ENCODE measurements at regions of chr9 and their contacts with region 1.

Region 1: DNA sequence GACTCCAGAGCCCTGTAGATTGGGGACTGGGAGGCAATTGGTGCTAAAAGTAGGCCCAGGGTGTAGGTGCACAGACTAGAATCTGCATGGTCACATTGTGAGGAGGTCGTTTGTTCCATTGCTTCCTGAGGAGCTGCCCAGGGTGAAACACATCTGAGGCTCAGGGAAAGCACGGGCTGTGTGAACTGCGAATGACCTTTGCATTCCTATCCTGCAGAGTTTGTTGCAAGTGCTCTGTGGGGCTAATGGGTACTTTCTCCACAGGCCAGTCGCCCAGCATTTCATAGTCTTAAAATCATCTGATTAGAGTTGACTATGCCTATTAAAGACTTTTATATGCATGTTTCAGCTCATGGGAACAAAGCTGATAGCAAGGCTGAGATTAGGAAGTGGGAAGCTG is 14.4 kb upstream of the SLC46A2 start:
- DNase-seq: no peak
- H3K4me3 ChIP-seq: no peak overlapping the region
- H3K27ac ChIP-seq: no peak overlapping the region
- H3K4me1 ChIP-seq: no peaks in the 10 kb centered on the region
- H3K27me3 ChIP-seq: no peaks in the 10 kb centered on the region
- CTCF ChIP-seq: no peak
- EP300 ChIP-seq: no peak
- POLR2A ChIP-seq: no peak

Region 2: DNA sequence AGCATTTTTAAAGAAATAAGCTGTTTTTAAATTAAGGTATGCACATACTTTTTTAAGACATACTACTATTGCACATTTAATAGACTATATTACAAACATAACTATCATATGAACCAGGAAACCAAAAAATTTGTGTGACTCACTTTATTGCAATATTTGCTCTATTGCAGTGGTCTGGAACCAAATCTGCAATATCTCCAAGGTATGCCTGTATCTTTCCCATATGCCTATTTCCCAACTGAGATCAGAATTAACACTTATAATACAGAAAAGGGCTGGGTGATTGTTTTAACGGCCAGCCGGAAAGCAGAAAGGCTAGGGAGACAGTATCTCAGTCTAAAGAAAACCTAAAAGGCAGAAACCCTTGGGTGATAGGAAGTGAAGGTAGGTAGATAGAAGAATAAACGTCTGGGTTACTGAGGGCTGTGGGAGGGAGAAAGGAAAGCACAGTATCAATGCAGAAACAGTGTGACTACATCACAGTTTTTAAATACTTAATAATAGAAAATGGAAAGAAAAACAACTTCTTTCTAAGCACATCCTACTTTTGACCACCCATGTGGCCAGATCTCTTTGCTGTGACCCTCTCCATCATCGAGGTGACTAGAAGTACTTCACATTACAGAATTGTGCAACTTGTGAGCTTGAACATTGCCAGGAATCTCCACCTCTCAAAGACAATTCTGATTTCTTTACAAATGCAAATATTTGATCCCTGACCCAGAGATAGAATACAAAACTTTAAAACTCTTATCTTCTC is 1993.2 kb before region 1 on chr9:
- in situ Hi-C with region 1: no loop called
- intact Hi-C with region 1: loop called (anchors 5 kb)
- DNase-seq: no peak
- H3K4me3 ChIP-seq: no peak overlapping the region
- H3K27ac ChIP-seq: peak overlapping the region; percentile 28 to 57 (median 50)
- H3K4me1 ChIP-seq: peaks cover 0 to 10% (median 0%) of the 10 kb centered on the region in 4 donors
- H3K27me3 ChIP-seq: no peaks in the 10 kb centered on the region
- CTCF ChIP-seq: no peak
- EP300 ChIP-seq: no peak
- POLR2A ChIP-seq: no peak

Region 3: DNA sequence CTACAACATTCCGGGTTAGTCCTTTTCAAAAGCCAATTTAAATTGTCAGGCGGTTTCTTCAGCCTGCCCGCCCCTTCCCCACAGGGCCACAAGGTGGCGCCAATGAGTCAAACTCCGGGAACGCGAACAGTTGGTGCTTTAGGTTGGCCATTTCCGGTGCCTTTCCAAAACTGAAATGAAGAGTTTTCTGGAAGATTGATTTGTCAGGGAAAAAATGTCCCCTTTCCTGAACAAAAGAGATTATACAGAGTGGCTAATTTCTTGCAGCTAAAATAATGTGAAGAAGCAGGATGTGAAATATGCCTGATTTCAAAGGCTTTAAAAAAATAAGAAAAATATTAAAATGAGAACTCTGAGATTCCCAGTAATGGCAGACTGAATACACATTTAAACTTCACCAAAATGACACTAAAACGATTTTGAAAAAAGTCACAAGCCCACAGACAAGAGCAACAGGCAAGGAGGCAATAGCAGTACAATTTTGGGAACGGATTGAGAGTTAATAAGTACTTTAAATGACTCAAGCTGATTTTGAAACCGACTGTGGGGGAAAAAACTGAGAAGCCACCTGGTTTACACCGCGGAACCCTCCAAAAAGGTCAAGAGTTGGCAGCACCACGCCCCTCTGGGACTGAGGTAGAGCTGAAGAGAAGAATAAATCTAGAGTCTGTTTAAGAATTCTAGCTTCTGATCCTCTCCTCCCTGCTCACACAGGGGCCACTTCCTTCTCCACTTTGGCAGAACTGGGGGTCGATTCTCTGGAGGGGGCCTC is 60.1 kb before region 1 on chr9:
- in situ Hi-C with region 1: loop called in 1 of 4 experiments (anchors 10 kb)
- intact Hi-C with region 1: no loop called
- DNase-seq: peak; percentile 82
- H3K4me3 ChIP-seq: no peak overlapping the region
- H3K27ac ChIP-seq: no peak overlapping the region
- H3K4me1 ChIP-seq: peaks cover 0 to 10% (median 2%) of the 10 kb centered on the region in 4 donors
- H3K27me3 ChIP-seq: no peaks in the 10 kb centered on the region
- CTCF ChIP-seq: peak; percentile 91 to 99 (median 96)
- EP300 ChIP-seq: no peak
- POLR2A ChIP-seq: no peak

Measured in transverse colon (tissue), 4 donors.